ENCODE measurements at regions of chr9 and their contacts with region 1.

Region 1: DNA sequence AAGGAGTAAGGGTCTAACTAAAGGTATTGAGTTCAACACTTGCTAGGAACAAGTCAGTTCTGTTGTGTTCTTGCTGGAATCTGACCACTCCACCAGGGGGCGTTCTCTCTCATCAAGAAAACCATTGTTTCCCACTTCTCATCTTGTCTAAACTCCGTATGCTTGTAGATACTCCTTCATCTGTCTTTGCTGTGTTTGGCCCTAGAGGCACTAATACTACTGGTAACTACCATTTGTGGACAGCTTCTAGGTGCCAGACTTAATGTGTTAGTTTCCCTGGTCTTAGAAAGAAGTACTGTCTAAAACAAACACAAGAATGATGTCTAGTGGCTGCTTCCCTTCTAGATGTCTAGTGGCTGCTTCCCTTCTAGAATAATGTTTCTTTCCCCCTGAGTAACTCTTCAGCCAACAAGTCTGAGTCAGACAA is 18.7 kb upstream of the PTPDC1 start:
- DNase-seq: no peak
- H3K4me3 ChIP-seq: no peak overlapping the region
- H3K27ac ChIP-seq: no peak overlapping the region
- H3K4me1 ChIP-seq: no peaks in the 10 kb centered on the region
- H3K27me3 ChIP-seq: no peaks in the 10 kb centered on the region
- CTCF ChIP-seq: peak; percentile 60 to 89 (median 86)
- POLR2A ChIP-seq: no peak

Region 2: GRCh38 chr9:94213511-94214124 is 148.1 kb after region 1 on chr9:
- intact Hi-C with region 1: loop called (anchors 2 kb)
- DNase-seq: no peak
- H3K4me3 ChIP-seq: no peak overlapping the region
- H3K27ac ChIP-seq: no peak overlapping the region
- H3K4me1 ChIP-seq: no peaks in the 10 kb centered on the region
- H3K27me3 ChIP-seq: no peaks in the 10 kb centered on the region
- CTCF ChIP-seq: peak; percentile 88 to 94 (median 88)
- POLR2A ChIP-seq: no peak